ENCODE measurements at regions of chr10 and their contacts with region 1.

Region 1: DNA sequence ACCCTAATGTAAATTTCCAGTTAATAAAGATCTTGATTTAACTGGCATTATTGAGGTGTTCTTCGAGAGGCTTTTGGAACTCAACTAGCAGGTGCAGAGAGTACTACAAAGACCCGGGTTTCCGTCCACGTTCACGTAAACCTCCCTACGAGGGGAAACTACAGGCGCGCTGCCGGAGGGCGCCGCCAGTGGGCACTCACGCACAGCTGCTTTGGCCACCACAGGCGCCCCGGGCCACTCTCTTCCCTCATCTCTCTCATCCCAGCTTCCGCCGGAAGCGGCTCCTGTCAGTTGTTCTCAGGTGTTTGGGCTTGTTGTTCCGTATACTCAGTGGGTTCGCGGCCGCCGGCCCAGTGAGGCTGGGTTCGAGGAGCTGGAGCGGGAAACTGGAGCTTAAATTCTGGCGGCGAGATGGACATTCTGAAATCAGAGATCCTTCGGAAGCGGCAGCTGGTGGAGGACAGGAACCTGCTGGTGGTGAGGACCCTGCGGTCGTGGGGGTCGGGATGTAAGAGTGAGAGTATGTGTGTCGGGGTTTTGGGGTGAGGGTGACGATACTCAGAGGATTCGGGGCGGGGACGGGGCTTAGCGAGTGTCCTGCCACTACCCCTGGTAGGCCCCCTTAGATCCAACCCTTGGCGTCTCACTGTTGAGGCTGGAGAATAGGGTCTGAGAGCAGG is at the start of gene PRPF18:
- DNase-seq: peak; percentile 96
- H3K4me3 Mint-ChIP-seq: peak within 1 kb of the TSS; percentile 99
- H3K27ac Mint-ChIP-seq: peak within 1 kb of the TSS; percentile 87
- H3K4me1 Mint-ChIP-seq: peaks cover 27% of the 10 kb centered on the region
- H3K27me3 Mint-ChIP-seq: peaks cover 2% of the 10 kb centered on the region
- total RNA-seq, gene PRPF18: 20.2 to 20.8 TPM

Region 2: GRCh38 chr10:13160934-13161856 is 425.6 kb before region 1 on chr10 and contains the start of gene MCM10:
- CTCF ChIA-PET with region 1: no interaction called
- intact Hi-C with region 1: loop called (anchors 2 kb)
- DNase-seq: peak; percentile 99
- H3K4me3 Mint-ChIP-seq: peak within 1 kb of the TSS; percentile 88
- H3K27ac Mint-ChIP-seq: peak within 1 kb of the TSS; percentile 63
- H3K4me1 Mint-ChIP-seq: peaks cover 27% of the 10 kb centered on the region
- H3K27me3 Mint-ChIP-seq: peaks cover 2% of the 10 kb centered on the region
- total RNA-seq, gene MCM10: 76.9 to 81.1 TPM

Region 3: GRCh38 chr10:13284050-13284449 is 302.8 kb before region 1 on chr10:
- CTCF ChIA-PET with region 1: no interaction called
- intact Hi-C with region 1: no loop called
- DNase-seq: no peak
- H3K4me3 Mint-ChIP-seq: no peak overlapping the region
- H3K27ac Mint-ChIP-seq: no peak overlapping the region
- H3K4me1 Mint-ChIP-seq: no peaks in the 10 kb centered on the region
- H3K27me3 Mint-ChIP-seq: no peaks in the 10 kb centered on the region

Region 4: DNA sequence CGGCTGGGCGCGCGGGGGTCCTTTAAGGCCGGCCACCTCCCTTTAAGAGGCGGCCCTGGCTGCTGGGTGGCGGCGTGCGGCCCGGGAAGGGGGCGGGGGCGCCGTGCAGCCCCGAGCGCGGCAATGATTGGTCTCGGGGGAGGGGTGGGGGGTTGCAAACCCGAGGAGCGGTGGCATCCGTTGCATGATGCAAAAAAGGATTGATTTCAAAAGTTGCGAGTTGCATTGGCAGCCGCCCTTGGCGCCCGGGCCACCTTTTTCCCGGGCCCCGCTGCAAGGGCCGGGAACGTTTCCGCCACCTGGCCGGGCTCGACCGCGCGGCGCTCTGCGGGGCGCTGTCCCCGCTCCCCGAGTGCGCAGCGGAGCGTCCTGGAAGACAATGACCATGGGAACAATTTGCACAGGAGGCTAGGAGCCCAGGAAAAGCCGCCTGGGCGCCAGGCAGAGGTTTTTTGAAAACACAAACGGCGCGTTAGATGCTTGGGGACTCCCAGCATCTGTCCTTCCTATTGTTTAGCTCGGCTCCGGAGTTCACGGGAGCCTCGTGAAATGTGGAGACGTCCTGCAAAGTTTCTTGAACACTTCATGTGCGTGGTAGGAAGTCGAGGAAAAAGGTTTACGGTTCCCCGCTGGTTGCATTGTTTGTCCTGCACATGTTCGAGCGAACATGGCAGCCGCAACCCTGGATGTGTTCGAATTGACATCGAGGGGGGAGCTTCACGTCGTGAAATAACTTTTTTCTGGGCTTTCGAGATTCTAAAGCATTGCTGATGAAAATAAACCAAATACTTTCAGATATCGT is 238.4 kb before region 1 on chr10 and contains the start of gene SEPHS1:
- CTCF ChIA-PET with region 1: no interaction called
- intact Hi-C with region 1: loop called (anchors 1 kb)
- DNase-seq: peak; percentile 91
- H3K4me3 Mint-ChIP-seq: peak within 1 kb of the TSS; percentile 88
- H3K27ac Mint-ChIP-seq: peak within 1 kb of the TSS; percentile 94
- H3K4me1 Mint-ChIP-seq: peaks cover 57% of the 10 kb centered on the region
- H3K27me3 Mint-ChIP-seq: no peaks in the 10 kb centered on the region
- total RNA-seq, gene SEPHS1: 75.6 to 79.6 TPM

Region 5: DNA sequence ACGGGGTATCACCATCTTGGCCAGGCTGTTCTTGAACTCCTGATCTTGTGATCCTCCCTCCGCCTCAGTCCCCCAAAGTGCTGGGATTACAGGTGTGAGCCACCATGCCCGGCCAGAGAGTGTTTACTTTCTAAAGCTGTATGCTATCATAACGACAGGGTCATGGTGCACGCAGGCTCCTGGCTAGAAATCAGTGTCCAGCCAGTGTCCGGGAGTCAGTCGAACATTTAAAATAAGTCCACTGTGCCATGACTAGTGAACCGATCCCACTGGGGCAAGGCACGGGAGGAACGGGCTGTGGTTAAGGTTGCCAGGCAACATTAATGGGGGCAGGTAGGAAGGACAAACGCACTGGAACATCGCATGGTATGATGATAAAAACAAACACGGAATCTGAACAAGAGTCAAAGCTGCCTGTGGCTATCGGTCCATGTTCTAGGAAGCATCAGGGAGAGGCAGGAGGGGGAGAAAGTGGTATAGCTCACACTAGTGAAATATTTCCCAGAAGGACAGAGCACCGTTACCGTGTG is 149.7 kb before region 1 on chr10:
- CTCF ChIA-PET with region 1: no interaction called
- intact Hi-C with region 1: no loop called
- DNase-seq: no peak
- H3K4me3 Mint-ChIP-seq: no peak overlapping the region
- H3K27ac Mint-ChIP-seq: no peak overlapping the region
- H3K4me1 Mint-ChIP-seq: peaks cover 7% of the 10 kb centered on the region
- H3K27me3 Mint-ChIP-seq: peaks cover 33% of the 10 kb centered on the region

Region 6: GRCh38 chr10:13485623-13486022 is 101.2 kb before region 1 on chr10:
- CTCF ChIA-PET with region 1: no interaction called
- intact Hi-C with region 1: no loop called
- DNase-seq: no peak
- H3K4me3 Mint-ChIP-seq: no peak overlapping the region
- H3K27ac Mint-ChIP-seq: no peak overlapping the region
- H3K4me1 Mint-ChIP-seq: peaks cover 4% of the 10 kb centered on the region
- H3K27me3 Mint-ChIP-seq: peaks cover 2% of the 10 kb centered on the region

Region 7: GRCh38 chr10:13528875-13529713 is 57.7 kb before region 1 on chr10 and contains the start of gene BEND7:
- CTCF ChIA-PET with region 1: no interaction called
- intact Hi-C with region 1: loop called (anchors 5 kb)
- DNase-seq: no peak
- H3K4me3 Mint-ChIP-seq: peak within 1 kb of the TSS; percentile 69
- H3K27ac Mint-ChIP-seq: no peak within 1 kb of the TSS
- H3K4me1 Mint-ChIP-seq: peaks cover 10% of the 10 kb centered on the region
- H3K27me3 Mint-ChIP-seq: peaks cover 51% of the 10 kb centered on the region
- total RNA-seq, gene BEND7: not detected

Region 8: DNA sequence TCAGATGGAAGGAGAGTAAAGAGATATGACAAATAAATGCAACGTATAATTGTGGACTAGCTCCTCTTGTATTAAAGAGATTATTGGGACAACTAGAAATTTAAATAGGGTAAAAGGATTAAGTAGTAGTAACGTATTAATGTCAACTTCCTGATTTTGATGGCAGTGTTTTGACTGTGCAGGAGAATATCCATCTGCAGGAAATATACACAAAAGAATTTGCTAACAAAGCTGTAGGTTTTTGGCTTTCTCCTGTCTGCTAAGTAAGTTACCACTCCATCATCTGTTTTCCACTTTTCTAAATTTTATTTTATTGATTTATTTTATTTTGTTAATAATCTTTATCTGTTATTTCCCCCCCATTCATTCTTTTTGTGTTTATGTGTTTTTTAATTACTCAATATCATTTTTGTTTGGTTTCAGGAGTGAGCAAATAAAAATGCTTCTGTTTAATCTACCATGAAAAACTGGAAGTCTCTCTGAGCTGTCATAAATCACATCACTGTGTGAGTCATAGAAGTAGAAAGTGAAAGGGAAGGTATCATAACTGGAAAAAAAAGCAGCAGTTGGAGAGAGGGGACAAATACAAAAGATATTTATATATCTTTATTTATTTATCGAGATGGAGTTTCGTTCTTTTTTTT is 30.0 kb before region 1 on chr10:
- CTCF ChIA-PET with region 1: no interaction called
- intact Hi-C with region 1: loop called (anchors 1 kb)
- DNase-seq: no peak
- H3K4me3 Mint-ChIP-seq: no peak overlapping the region
- H3K27ac Mint-ChIP-seq: no peak overlapping the region
- H3K4me1 Mint-ChIP-seq: peaks cover 6% of the 10 kb centered on the region
- H3K27me3 Mint-ChIP-seq: no peaks in the 10 kb centered on the region

Region 9: DNA sequence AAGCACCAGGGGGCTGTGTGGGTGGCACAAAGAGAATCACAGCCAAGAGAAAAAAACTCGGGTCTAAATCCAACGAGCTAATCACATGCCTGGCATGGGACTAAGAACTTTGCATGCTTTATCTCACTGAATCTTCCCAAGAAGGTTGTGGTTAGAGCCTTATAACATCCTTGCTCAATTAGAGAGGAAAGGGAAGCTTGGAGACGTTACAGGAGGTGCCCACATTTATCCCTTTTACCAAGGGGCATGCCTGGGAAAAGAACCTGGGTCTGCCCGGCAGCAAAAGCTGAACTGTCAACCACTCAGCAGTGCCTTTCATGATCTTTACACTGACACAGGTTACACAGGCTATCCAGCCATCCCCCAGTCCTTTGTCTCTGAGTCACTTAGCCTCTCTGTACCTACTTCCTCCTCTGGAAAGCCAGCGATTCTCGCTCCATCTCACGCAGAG is 190.1 kb after region 1 on chr10:
- CTCF ChIA-PET with region 1: no interaction called
- intact Hi-C with region 1: loop called (anchors 1 kb)
- DNase-seq: no peak
- H3K4me3 Mint-ChIP-seq: no peak overlapping the region
- H3K27ac Mint-ChIP-seq: no peak overlapping the region
- H3K4me1 Mint-ChIP-seq: no peaks in the 10 kb centered on the region
- H3K27me3 Mint-ChIP-seq: no peaks in the 10 kb centered on the region

Region 10: DNA sequence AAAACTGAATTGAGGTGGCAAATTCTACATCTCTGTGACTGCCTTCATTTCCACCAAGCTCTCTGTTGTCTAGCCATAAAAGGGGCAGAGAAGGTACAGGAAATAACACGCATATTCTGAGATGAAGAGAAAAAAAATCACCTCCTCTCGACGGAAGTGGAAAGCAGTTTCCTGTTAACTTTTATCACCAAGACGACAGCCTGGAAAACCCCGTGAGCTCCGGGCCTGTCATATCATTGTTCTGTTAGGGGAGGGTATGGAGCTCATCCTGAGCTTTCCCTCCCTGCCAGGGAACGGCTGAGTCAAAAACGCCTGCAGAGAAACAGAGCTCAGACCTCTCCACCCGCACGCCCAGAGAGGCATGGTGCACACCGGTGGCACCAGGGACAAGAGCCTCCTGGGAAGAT is 200.2 kb after region 1 on chr10:
- CTCF ChIA-PET with region 1: no interaction called
- intact Hi-C with region 1: no loop called
- DNase-seq: peak; percentile 92
- H3K4me3 Mint-ChIP-seq: peak overlapping the region; percentile 45
- H3K27ac Mint-ChIP-seq: peak overlapping the region; percentile 93
- H3K4me1 Mint-ChIP-seq: peaks cover 33% of the 10 kb centered on the region
- H3K27me3 Mint-ChIP-seq: no peaks in the 10 kb centered on the region